ENCODE measurements at regions of chr11 and their contacts with region 1.

Region 1: DNA sequence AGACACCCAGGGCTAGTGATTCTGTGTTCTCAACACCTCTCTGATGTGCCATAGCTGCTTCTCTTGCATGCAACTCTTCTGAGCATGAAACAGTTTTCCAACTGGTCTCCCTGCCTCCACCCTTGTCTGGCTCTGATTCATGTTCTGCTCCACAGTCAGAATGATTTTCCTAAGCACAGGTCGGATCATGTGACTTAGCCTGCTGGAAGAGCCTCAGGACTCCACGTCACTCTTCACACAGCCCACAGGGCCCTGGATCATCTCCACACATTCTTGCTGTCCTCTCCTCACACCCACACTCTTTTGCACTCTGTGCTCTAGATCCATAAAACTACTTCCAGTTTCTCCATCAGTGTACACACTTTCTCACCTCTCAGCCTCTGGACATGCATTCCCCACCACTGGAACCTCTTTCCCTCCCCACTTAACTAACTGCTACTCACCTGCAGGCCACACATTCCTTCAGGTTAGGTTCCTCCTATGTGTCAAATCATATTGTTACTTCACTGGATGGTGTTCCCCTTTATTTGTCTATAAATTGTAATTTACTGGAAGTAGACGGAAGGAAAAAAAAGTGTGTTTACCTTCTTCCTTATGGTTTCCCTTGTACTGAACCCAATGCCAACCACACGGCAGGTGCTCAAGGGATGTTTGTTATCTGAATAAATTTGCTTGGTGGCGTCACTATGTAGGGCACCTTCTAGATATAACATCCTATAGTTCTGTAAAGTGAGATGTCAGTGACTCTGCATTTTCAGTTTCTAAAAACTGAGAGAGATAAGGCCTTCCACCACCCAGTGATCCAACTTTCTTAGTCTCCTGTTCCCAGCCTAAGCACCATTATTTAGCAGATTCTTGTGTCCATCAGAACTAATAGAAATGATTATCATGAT is 133.7 kb downstream of the ETS1 start:
- DNase-seq: peak in 1 of 2 donors; percentile 83
- H3K4me3 ChIP-seq: no peak overlapping the region
- H3K27ac ChIP-seq: peak overlapping the region; percentile 82 to 85
- H3K4me1 ChIP-seq: peaks cover 10 to 25% of the 10 kb centered on the region in 2 donors
- H3K27me3 ChIP-seq: no peaks in the 10 kb centered on the region
- CTCF ChIP-seq: no peak

Region 2: DNA sequence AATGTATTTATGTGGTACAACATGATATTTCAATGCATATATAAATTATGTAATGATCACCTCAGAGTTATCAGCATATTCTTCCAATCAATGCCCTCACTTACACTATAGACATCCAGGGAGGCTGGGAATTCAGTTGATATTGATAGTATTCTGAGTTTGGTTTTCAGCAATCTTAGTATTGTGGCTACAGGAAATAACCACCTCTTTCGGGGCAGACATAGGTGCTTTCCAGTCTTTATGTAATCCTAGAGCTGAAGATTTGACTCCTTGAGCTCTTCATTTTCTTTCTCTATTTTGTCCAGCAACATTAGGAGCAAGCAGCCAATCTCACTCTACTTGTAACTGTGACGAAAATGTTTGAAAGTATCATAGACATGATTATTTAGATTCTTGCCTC is 740.5 kb before region 1 on chr11:
- intact Hi-C with region 1: no loop called
- DNase-seq: no peak
- H3K4me3 ChIP-seq: no peak overlapping the region
- H3K27ac ChIP-seq: no peak overlapping the region
- H3K4me1 ChIP-seq: no peaks in the 10 kb centered on the region
- H3K27me3 ChIP-seq: no peaks in the 10 kb centered on the region
- CTCF ChIP-seq: no peak

Region 3: DNA sequence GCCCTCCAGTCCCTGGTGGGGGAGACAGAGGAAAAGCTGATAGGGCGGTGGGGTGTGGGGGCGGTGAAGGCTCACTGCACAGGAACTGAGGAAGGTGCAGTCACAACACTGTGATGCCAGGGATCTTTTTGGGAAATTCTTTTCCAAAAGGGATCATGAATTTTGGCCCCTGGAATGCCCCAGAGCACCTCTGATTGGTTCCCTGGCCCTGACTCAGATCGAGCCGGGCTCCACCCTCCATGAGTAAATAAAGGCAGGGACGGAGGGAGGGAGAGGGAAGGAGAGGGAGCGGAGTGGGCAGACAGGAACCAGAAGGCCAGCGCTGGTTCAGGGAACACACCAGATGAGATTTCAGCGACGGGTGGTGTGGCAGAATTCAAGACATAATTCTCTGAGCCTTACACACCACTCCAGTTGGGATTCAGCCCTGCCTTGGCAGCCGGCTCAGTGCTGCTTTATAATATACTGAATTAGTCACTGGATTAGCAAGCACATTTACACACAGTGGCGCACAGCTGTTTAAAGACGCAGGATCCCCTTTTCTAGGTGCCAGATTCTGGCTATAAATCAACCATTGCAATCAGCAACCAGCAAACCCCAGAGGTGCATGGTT is 53.4 kb after region 1 on chr11:
- intact Hi-C with region 1: loop called (anchors 5 kb)
- DNase-seq: peak; percentile 83 to 96
- H3K4me3 ChIP-seq: peak overlapping the region; percentile 9 to 59
- H3K27ac ChIP-seq: peak overlapping the region; percentile 84 to 94
- H3K4me1 ChIP-seq: peaks cover 22 to 59% of the 10 kb centered on the region in 2 donors
- H3K27me3 ChIP-seq: no peaks in the 10 kb centered on the region
- CTCF ChIP-seq: no peak

Measured in ascending aorta (tissue), 2 donors.